Right lobe of liver (tissue), 6 donors: ENCODE measurements at regions of chr16 and their contacts with region 1.

Region 1: GRCh38 chr16:49350265-49351095 is 23.1 kb upstream of the C16orf78 start:
- DNase-seq: peak; percentile 64 to 75 (median 72)
- ATAC-seq: peak; percentile 74 to 86 (median 80)
- H3K4me3 ChIP-seq: no peak overlapping the region
- H3K27ac ChIP-seq: no peak overlapping the region
- H3K4me1 ChIP-seq: no peaks in the 10 kb centered on the region
- H3K27me3 ChIP-seq: no peaks in the 10 kb centered on the region
- CTCF ChIP-seq: peak; percentile 68 to 84 (median 78)
- POLR2A ChIP-seq: no peak

Region 2: GRCh38 chr16:48687421-48688038 is 663.0 kb before region 1 on chr16:
- intact Hi-C with region 1: loop called (anchors 5 kb)
- DNase-seq: peak; percentile 43 to 58 (median 58)
- ATAC-seq: peak; percentile 95 to 97 (median 96)
- H3K4me3 ChIP-seq: no peak overlapping the region
- H3K27ac ChIP-seq: no peak overlapping the region
- H3K4me1 ChIP-seq: no peaks in the 10 kb centered on the region
- H3K27me3 ChIP-seq: no peaks in the 10 kb centered on the region
- CTCF ChIP-seq: peak; percentile 54 to 82 (median 74)
- POLR2A ChIP-seq: no peak

Region 3: DNA sequence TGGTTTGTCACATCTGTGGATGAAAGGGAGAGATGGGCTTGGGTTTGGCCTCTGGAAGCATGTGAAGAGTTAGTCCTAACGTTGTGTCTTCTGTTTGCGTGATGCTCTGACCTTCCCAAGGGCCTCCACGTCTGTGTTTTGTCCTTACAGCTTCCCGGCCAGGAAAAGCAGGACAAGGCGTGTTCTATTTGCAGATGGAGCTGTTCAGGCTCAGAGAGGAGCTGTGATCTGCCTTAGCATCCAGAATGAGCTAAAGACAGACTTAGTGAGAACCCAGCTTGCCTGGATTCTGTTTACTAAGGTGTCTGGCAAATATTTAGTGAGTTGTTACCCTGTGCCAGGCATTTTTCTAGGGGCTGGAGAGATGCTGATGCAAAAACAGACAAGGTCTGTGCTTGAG is 351.0 kb before region 1 on chr16:
- intact Hi-C with region 1: loop called in 1 of 2 experiments (anchors 10 kb)
- DNase-seq: no peak
- ATAC-seq: no peak
- H3K4me3 ChIP-seq: no peak overlapping the region
- H3K27ac ChIP-seq: no peak overlapping the region
- H3K4me1 ChIP-seq: no peaks in the 10 kb centered on the region
- H3K27me3 ChIP-seq: no peaks in the 10 kb centered on the region
- CTCF ChIP-seq: no peak
- POLR2A ChIP-seq: no peak

Region 4: GRCh38 chr16:49150341-49150740 is 200.1 kb before region 1 on chr16:
- intact Hi-C with region 1: no loop called
- DNase-seq: no peak
- ATAC-seq: no peak
- H3K4me3 ChIP-seq: no peak overlapping the region
- H3K27ac ChIP-seq: no peak overlapping the region
- H3K4me1 ChIP-seq: no peaks in the 10 kb centered on the region
- H3K27me3 ChIP-seq: no peaks in the 10 kb centered on the region
- CTCF ChIP-seq: no peak
- POLR2A ChIP-seq: no peak

Region 5: GRCh38 chr16:49236216-49236615 is 114.3 kb before region 1 on chr16:
- intact Hi-C with region 1: no loop called
- DNase-seq: no peak
- ATAC-seq: no peak
- H3K4me3 ChIP-seq: no peak overlapping the region
- H3K27ac ChIP-seq: no peak overlapping the region
- H3K4me1 ChIP-seq: no peaks in the 10 kb centered on the region
- H3K27me3 ChIP-seq: no peaks in the 10 kb centered on the region
- CTCF ChIP-seq: no peak
- POLR2A ChIP-seq: no peak

Region 6: GRCh38 chr16:49287572-49287971 is 62.9 kb before region 1 on chr16:
- intact Hi-C with region 1: no loop called
- DNase-seq: no peak
- ATAC-seq: no peak
- H3K4me3 ChIP-seq: no peak overlapping the region
- H3K27ac ChIP-seq: no peak overlapping the region
- H3K4me1 ChIP-seq: peaks cover 0 to 10% (median 0%) of the 10 kb centered on the region in 4 donors
- H3K27me3 ChIP-seq: peaks cover 0 to 17% of the 10 kb centered on the region in 2 donors
- CTCF ChIP-seq: no peak
- POLR2A ChIP-seq: no peak